BJ (cell line): ENCODE measurements at regions of chr6 and their contacts with region 1.

Region 1: DNA sequence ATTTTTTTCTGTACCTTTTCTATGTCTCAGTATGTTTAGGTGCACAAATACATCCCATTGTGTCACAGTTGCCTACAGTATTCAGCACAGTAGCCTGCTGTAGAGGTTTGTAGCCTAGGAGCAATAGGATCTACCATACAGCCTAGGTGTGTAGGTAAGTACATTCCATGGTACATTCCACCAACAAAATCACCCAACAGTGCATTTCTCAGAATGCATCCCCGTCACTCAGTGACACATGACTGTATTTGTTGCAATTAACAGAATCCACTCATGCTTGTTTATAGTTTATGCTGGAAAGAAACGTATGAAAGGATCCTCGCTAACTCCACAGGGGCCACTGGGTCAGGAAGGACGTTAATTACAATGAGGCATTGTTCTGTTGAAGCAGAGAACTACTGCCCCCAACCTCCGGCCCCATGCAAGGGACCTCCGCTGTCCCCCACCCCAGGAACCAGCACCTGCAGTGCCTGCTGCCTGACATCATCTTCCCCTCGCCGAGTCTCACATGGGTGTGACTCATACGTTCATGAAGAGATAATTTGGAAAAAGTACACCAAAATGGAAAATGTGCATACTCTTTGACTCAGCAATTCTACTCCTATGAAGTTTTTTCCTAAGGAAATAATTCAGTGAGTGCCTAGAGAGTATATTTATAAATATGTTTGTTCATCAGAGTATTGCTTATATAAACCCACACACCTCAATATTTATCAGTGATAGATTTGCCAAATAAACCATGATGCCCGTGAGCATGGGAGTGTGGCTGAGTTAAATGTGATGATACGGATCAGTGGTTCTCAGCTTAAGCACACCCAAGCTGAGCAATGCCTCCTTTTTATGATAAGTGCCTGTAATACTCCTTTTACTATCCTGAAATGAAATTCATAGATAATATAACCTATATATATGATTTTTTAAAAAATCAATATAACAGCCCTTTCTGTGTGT is 156.4 kb upstream of the ECI2 start:
- DNase-seq: no peak
- H3K4me3 ChIP-seq: no peak overlapping the region
- H3K27me3 ChIP-seq: peaks cover 2% of the 10 kb centered on the region; the same call in 1 of the 2 replicates
- CTCF ChIP-seq: no peak

Region 2: GRCh38 chr6:4280721-4281120 is 11.0 kb before region 1 on chr6:
- CTCF ChIA-PET with region 1: no interaction called
- POLR2A ChIA-PET with region 1: interaction called, 18 read pairs
- DNase-seq: peak; percentile 20
- H3K4me3 ChIP-seq: no peak overlapping the region
- H3K27me3 ChIP-seq: peaks cover 4% of the 10 kb centered on the region
- CTCF ChIP-seq: no peak